Activated T-helper 1 cell treated with anti-CD3 and anti-CD28 coated beads, Interleukin-12 subunit alpha, Interleukin-12 subunit beta, Interleukin-2, Interleukin-4 antibody, amounts not matched to agents 30 ng/mL and 10 ng/mL and 1 ng/mL, durations not matched to agents 14 hours and 24 hours and 36 hours (primary cell): ENCODE measurements at regions of chr2 and their contacts with region 1.

Region 1: GRCh38 chr2:236512902-236513435 is 56.7 kb upstream of the ACKR3 start:
- DNase-seq: peak; percentile 55
- H3K4me3 Mint-ChIP-seq: no peak overlapping the region
- H3K27ac Mint-ChIP-seq: no peak overlapping the region
- H3K4me1 Mint-ChIP-seq: peaks cover 5% of the 10 kb centered on the region
- H3K27me3 Mint-ChIP-seq: peaks cover 28% of the 10 kb centered on the region

Region 2: DNA sequence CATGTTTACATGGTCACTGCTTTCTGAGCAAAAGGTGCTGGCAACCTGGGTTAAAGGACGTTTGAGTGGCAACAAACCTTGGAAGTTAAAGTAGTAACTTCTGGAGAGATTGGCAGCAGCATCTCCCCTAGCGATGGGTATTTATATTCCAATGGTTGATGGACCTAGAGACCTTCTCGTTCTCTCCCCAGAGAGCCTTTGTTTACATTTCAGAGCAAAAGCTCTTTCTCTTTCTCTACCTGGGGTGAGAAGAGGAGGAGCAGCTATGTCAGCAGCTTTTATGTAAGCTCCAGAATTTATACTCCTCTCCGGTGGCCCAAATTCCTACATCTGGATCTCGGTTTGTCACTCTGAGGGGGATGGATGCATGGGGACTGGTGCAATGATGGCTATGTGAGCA is 1802.4 kb before region 1 on chr2:
- intact Hi-C with region 1: no loop called
- DNase-seq: no peak
- H3K4me3 Mint-ChIP-seq: no peak overlapping the region
- H3K27ac Mint-ChIP-seq: no peak overlapping the region
- H3K4me1 Mint-ChIP-seq: no peaks in the 10 kb centered on the region
- H3K27me3 Mint-ChIP-seq: no peaks in the 10 kb centered on the region

Region 3: GRCh38 chr2:236352761-236353593 is 160.0 kb before region 1 on chr2:
- intact Hi-C with region 1: loop called (anchors 1 kb)
- DNase-seq: no peak
- H3K4me3 Mint-ChIP-seq: no peak overlapping the region
- H3K27ac Mint-ChIP-seq: no peak overlapping the region
- H3K4me1 Mint-ChIP-seq: no peaks in the 10 kb centered on the region
- H3K27me3 Mint-ChIP-seq: peaks cover 1% of the 10 kb centered on the region

Region 4: DNA sequence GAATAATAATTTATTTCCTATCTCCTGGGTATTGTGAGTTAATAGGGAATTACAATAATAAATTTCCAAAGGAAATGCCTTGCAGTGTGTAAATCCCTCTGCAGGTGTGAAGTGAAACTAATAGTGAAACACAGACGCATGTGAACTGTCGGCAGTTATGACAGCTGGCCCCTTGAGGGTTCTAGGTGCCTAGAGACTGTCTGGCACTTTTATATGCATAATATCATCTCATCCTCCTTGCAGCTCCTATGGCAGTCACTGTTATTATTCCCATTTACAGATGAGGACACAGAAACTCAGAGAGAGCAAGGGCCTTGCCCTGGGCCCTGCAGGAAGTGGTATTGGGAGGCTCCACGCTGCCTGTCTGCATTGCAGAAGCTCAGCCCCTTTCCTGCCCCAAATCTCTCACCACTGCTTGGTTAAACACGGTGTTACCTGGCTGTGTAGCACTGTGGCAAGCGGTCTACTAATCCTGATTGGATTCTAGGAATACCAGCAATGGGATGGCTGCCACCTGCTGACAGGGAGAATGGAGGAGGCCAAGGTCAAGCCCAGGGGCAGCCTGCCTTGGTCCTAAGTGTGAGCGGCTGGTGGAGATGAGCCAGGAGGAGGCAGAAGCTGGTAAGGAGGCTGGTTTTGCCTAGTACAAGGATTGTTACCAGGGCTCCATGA is 23.9 kb after region 1 on chr2:
- intact Hi-C with region 1: loop called (anchors 1 kb)
- DNase-seq: peak; percentile 45
- H3K4me3 Mint-ChIP-seq: peak overlapping the region; percentile 92
- H3K27ac Mint-ChIP-seq: peak overlapping the region; percentile 93
- H3K4me1 Mint-ChIP-seq: peaks cover 63% of the 10 kb centered on the region
- H3K27me3 Mint-ChIP-seq: no peaks in the 10 kb centered on the region

Region 5: DNA sequence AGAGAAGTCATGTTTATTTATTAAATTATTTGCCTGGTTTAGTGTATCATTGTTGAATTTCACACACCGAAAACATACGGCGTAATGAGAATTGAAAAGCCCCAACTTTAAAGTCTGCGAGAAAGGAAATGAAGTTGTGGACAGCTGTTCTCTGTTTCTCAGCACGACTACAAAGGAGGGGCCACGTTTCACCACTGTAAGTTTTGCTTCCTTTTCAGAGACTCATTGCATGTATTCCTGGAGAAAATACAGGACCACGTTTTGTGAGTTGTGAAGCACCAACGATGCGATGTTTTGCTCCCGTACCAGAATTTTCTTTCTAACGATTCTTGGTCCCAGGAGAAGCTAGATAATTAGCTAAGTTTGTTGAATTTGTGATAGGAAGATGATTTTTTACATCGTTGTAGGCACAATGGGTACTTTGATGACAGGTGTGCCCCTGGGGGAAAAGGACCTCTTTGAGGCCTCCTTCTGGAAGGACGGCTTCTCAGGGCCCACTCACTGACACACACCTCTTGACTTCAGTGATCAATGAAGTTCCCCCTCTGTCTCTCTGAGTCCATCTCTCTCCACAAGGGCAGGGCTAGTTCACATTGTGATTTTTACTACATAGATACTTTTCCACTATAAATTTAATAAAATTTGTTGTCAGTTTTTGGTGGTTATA is 33.0 kb after region 1 on chr2:
- intact Hi-C with region 1: loop called (anchors 2 kb)
- DNase-seq: no peak
- H3K4me3 Mint-ChIP-seq: peak overlapping the region; percentile 80
- H3K27ac Mint-ChIP-seq: peak overlapping the region; percentile 96
- H3K4me1 Mint-ChIP-seq: peaks cover 82% of the 10 kb centered on the region
- H3K27me3 Mint-ChIP-seq: no peaks in the 10 kb centered on the region

Region 6: GRCh38 chr2:237072067-237072931 is 559.3 kb after region 1 on chr2:
- intact Hi-C with region 1: loop called (anchors 1 kb)
- DNase-seq: peak; percentile 35
- H3K4me3 Mint-ChIP-seq: no peak overlapping the region
- H3K27ac Mint-ChIP-seq: no peak overlapping the region
- H3K4me1 Mint-ChIP-seq: no peaks in the 10 kb centered on the region
- H3K27me3 Mint-ChIP-seq: peaks cover 2% of the 10 kb centered on the region